T-cell (primary cell): ENCODE measurements at regions of chr14 and their contacts with region 1.

Region 1: GRCh38 chr14:56794557-56795283 is 15.6 kb downstream of the OTX2 start:
- DNase-seq: no peak
- ATAC-seq: no peak
- H3K4me3 ChIP-seq: no peak overlapping the region
- H3K4me3 Mint-ChIP-seq: no peak overlapping the region
- H3K27ac ChIP-seq: no peak overlapping the region
- H3K27ac Mint-ChIP-seq: no peak overlapping the region
- H3K4me1 ChIP-seq: peaks cover 0 to 12% of the 10 kb centered on the region in 2 experiments
- H3K4me1 Mint-ChIP-seq: peaks cover 4 to 15% (median 13%) of the 10 kb centered on the region in 3 donors
- H3K27me3 ChIP-seq: peaks cover 17 to 43% of the 10 kb centered on the region in 2 experiments
- H3K27me3 Mint-ChIP-seq: peaks cover 66% of the 10 kb centered on the region in 2 donors

Region 2: GRCh38 chr14:56534656-56535055 is 260.1 kb before region 1 on chr14:
- CTCF ChIA-PET with region 1: no interaction called
- POLR2A ChIA-PET with region 1: no interaction called
- DNase-seq: no peak
- ATAC-seq: no peak
- H3K4me3 ChIP-seq: no peak overlapping the region
- H3K4me3 Mint-ChIP-seq: no peak overlapping the region
- H3K27ac ChIP-seq: no peak overlapping the region
- H3K27ac Mint-ChIP-seq: no peak overlapping the region
- H3K4me1 ChIP-seq: no peaks in the 10 kb centered on the region
- H3K4me1 Mint-ChIP-seq: no peaks in the 10 kb centered on the region
- H3K27me3 ChIP-seq: no peaks in the 10 kb centered on the region
- H3K27me3 Mint-ChIP-seq: peaks cover 9 to 13% of the 10 kb centered on the region in 2 donors

Region 3: GRCh38 chr14:56569174-56569573 is 225.5 kb before region 1 on chr14:
- CTCF ChIA-PET with region 1: no interaction called
- POLR2A ChIA-PET with region 1: no interaction called
- DNase-seq: no peak
- ATAC-seq: no peak
- H3K4me3 ChIP-seq: no peak overlapping the region
- H3K4me3 Mint-ChIP-seq: no peak overlapping the region
- H3K27ac ChIP-seq: no peak overlapping the region
- H3K27ac Mint-ChIP-seq: no peak overlapping the region
- H3K4me1 ChIP-seq: no peaks in the 10 kb centered on the region
- H3K4me1 Mint-ChIP-seq: no peaks in the 10 kb centered on the region
- H3K27me3 ChIP-seq: peaks cover 2 to 7% of the 10 kb centered on the region in 2 experiments
- H3K27me3 Mint-ChIP-seq: peaks cover 25 to 32% of the 10 kb centered on the region in 2 donors

Region 4: GRCh38 chr14:56760164-56760914 is 34.4 kb before region 1 on chr14:
- CTCF ChIA-PET with region 1: no interaction called
- POLR2A ChIA-PET with region 1: no interaction called
- DNase-seq: no peak
- ATAC-seq: no peak
- H3K4me3 ChIP-seq: no peak overlapping the region
- H3K4me3 Mint-ChIP-seq: no peak overlapping the region
- H3K27ac ChIP-seq: no peak overlapping the region
- H3K27ac Mint-ChIP-seq: no peak overlapping the region
- H3K4me1 ChIP-seq: no peaks in the 10 kb centered on the region
- H3K4me1 Mint-ChIP-seq: no peaks in the 10 kb centered on the region
- H3K27me3 ChIP-seq: no peaks in the 10 kb centered on the region
- H3K27me3 Mint-ChIP-seq: peaks cover 2 to 20% of the 10 kb centered on the region in 2 donors

Region 5: GRCh38 chr14:56782701-56783100 is 12.0 kb before region 1 on chr14:
- CTCF ChIA-PET with region 1: no interaction called
- POLR2A ChIA-PET with region 1: interaction called in 1 of 2 experiments, 11 read pairs
- DNase-seq: no peak
- ATAC-seq: no peak
- H3K4me3 ChIP-seq: no peak overlapping the region
- H3K4me3 Mint-ChIP-seq: no peak overlapping the region
- H3K27ac ChIP-seq: no peak overlapping the region
- H3K27ac Mint-ChIP-seq: no peak overlapping the region
- H3K4me1 ChIP-seq: no peaks in the 10 kb centered on the region
- H3K4me1 Mint-ChIP-seq: no peaks in the 10 kb centered on the region
- H3K27me3 ChIP-seq: peaks cover 0 to 5% of the 10 kb centered on the region in 2 experiments
- H3K27me3 Mint-ChIP-seq: peaks cover 11 to 16% of the 10 kb centered on the region in 2 donors

Region 6: DNA sequence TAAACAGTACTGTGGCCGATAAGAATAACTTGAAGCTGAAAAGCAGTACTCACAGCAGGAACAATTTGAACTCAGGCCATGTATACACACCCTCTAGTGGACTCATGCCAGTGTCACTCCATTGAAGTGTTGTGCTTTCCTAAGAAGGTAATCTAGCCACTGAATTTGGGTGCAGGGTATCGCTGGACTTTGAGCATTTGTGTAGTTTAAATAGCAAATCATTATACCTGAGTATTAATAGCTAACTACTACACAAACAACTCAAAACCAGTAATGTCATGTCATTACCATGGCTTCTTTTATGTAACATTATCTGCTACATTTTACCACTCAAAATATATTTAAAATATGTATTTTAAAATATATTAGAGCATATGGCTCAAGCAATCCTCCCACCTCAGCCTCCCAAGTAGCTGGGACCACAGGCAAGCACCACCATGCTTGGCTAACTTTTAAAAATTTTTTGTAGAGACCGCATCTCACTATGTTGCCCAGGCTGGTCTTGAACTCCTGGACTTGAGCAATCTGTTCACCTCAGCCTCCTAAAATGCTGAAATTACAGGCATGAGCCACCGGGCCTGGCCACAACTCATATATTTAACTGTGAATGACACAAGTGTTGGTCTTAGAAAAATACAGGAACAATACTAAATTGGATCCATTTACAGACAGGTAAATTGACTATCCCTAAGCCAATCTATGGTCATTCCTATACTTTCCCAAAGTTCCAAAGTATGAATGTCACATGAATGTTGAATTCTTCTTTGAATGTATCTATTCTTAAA is 1478.1 kb after region 1 on chr14:
- CTCF ChIA-PET with region 1: no interaction called
- POLR2A ChIA-PET with region 1: no interaction called
- DNase-seq: peak in 1 of 35 experiments; percentile 17
- ATAC-seq: no peak
- H3K4me3 ChIP-seq: no peak overlapping the region
- H3K4me3 Mint-ChIP-seq: no peak overlapping the region
- H3K27ac ChIP-seq: no peak overlapping the region
- H3K27ac Mint-ChIP-seq: peak overlapping the region; percentile 15 to 39
- H3K4me1 ChIP-seq: peaks cover 15 to 19% of the 10 kb centered on the region in 2 experiments
- H3K4me1 Mint-ChIP-seq: peaks cover 32 to 52% (median 43%) of the 10 kb centered on the region in 3 donors
- H3K27me3 ChIP-seq: no peaks in the 10 kb centered on the region
- H3K27me3 Mint-ChIP-seq: no peaks in the 10 kb centered on the region